Mammary epithelial cell (primary cell): ENCODE measurements at regions of chr17 and their contacts with region 1.

Region 1: DNA sequence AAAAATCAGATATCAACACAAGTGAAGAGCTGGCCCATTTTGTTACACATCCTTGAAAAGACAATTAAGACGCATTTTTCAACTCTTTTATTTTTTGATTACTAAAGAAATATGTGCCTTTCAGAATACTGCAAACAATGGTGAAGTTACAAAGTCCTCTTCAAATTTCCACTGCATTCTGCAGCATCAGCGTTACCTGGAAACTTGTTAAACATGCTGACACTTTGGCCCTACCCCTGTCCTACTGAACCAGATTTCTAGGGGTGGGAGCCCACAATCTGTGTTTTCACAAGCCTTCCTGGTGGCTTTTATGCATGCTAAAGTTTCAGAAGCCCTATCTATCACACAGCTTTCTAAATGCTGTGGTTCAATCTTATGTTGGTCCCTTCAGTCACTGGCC is 4.5 kb upstream of the CCL14 start:
- DNase-seq: no peak
- H3K4me3 ChIP-seq: no peak overlapping the region
- H3K27ac ChIP-seq: no peak overlapping the region
- H3K4me1 ChIP-seq: no peaks in the 10 kb centered on the region
- H3K27me3 ChIP-seq: no peaks in the 10 kb centered on the region
- CTCF ChIP-seq: no peak

Region 2: DNA sequence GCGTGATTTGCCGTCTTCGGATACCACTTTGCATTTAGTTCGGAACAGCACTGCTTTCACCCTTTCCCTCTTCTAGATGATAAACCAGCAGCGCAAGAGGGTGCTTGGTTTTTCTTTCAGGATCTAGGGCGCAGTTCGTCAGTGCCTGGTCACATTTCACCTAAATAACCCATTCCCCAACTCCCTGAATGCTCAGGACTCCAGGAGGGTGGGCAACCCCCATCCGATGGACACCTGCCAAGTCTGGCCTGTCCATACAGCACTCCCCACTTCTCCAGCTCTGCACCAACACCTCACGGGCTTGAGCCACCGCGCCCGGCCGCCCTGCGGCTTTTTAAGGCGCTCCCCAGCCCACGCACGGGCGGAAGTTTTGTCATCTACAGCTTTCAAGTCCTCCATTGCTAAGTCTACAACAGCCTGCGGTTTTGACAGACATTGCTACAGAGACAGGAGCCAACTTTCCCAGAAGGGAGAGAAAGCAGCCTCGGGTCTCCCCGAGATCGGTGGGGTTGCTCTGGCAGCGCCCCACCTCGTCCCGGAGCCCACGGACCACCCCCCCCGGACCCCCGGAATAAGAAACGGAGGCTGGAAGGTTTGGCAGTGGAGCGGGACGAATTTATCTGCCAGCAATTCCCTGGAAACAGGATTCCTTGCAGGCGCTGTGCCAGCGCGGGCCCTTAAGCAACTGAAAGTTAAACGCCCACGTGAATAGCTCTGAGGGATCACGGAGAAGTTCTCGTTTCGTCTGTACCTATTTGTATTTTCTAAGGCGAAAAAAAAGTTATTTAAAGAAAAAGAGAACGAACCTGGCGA is 503.9 kb before region 1 on chr17:
- CTCF ChIA-PET with region 1: no interaction called
- dilution Hi-C with region 1: no loop called
- in situ Hi-C with region 1: no loop called
- intact Hi-C with region 1: no loop called
- DNase-seq: peak; percentile 73
- H3K4me3 ChIP-seq: peak overlapping the region; percentile 42 to 62 (median 50)
- H3K27ac ChIP-seq: peak overlapping the region; percentile 24
- H3K4me1 ChIP-seq: peaks cover 12% of the 10 kb centered on the region
- H3K27me3 ChIP-seq: peaks cover 18% of the 10 kb centered on the region
- CTCF ChIP-seq: no peak

Region 3: DNA sequence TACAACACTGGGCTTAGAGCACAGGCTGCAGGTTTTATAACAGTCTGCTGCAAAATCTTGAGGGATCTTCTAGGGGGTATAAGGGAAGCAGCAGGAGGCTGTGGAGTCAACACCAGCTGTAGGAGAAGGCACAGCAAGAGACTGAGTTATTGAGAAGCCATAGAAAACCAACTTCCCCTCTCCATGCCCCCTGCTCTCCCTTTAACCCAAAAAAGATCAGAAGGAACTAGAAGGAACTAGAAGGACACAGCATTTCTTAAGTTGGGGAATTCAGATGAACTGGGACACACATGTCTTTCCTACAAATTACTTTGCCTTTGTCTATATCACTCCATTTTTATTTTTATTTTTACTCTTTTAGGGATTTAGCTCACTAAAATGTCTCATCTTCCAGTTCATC is 66.8 kb after region 1 on chr17:
- CTCF ChIA-PET with region 1: no interaction called
- dilution Hi-C with region 1: no loop called
- in situ Hi-C with region 1: no loop called
- intact Hi-C with region 1: loop called (anchors 10 kb)
- DNase-seq: no peak
- H3K4me3 ChIP-seq: no peak overlapping the region
- H3K27ac ChIP-seq: no peak overlapping the region
- H3K4me1 ChIP-seq: no peaks in the 10 kb centered on the region
- H3K27me3 ChIP-seq: no peaks in the 10 kb centered on the region
- CTCF ChIP-seq: no peak

Region 4: GRCh38 chr17:36089888-36090836 is 99.1 kb after region 1 on chr17 and contains the start of gene CCL3:
- CTCF ChIA-PET with region 1: no interaction called
- dilution Hi-C with region 1: no loop called
- in situ Hi-C with region 1: no loop called
- intact Hi-C with region 1: no loop called
- DNase-seq: peak; percentile 11
- H3K4me3 ChIP-seq: no peak within 1 kb of the TSS
- H3K27ac ChIP-seq: no peak within 1 kb of the TSS
- H3K4me1 ChIP-seq: no peaks in the 10 kb centered on the region
- H3K27me3 ChIP-seq: no peaks in the 10 kb centered on the region
- CTCF ChIP-seq: no peak
- total RNA-seq, gene CCL3: not detected